Activated naive CD4-positive, alpha-beta T cell treated with anti-CD3 and anti-CD28 coated beads for 36 hours (primary cell): ENCODE measurements at regions of chr13 and their contacts with region 1.

Region 1: GRCh38 chr13:40666045-40666904 is at the start of gene FOXO1:
- DNase-seq: peak; percentile 84
- H3K4me3 Mint-ChIP-seq: peak within 1 kb of the TSS; percentile 92
- H3K27ac Mint-ChIP-seq: peak within 1 kb of the TSS; percentile 94
- H3K4me1 Mint-ChIP-seq: peaks cover 40% of the 10 kb centered on the region
- H3K27me3 Mint-ChIP-seq: no peaks in the 10 kb centered on the region
- total RNA-seq, gene FOXO1: 30.9 to 32.1 TPM

Region 2: DNA sequence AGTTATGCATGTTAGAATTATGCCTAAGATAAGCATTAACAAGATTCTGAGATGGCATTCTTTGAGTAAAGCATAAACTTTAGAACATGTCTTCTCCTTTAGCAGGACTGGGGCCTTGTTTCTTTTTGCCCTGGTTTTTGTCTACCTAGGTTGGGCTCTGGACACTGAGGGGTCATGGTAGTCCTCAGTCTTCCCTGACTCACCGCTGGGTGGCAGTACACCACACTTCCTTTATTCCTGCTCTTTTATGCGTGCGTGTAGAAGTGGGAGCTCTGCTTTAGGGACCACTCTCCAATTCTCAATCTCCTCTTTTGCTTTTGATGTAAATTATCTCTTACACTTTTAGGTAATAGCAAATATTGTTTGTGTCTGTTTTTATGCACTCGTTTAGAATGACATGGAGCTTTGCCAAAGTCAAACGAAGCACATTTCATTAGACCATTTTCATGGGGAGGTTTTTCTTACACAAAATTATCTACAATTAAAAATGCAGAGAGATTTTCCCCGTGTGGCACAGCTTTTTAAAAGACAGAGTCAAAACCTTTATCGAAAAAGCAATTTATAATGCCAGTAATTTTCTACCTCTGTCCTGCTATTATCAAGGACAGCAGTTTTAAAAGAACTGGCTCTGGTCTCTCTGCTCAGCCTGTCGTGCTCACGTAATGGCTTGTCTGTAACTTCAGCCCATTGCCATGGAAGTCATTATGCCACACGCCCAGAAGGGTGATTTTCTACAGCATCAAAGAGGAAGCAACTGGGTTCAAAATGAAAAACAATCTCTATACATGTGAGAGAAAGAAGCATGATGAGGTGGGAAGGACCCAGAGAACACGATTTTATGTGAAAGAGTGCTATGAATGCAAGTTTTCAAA is 596.9 kb before region 1 on chr13:
- CTCF ChIA-PET with region 1: interaction called, 5 read pairs
- intact Hi-C with region 1: loop called (anchors 1 kb)
- DNase-seq: peak; percentile 87
- H3K4me3 Mint-ChIP-seq: peak overlapping the region; percentile 12
- H3K27ac Mint-ChIP-seq: peak overlapping the region; percentile 27
- H3K4me1 Mint-ChIP-seq: peaks cover 29% of the 10 kb centered on the region
- H3K27me3 Mint-ChIP-seq: no peaks in the 10 kb centered on the region

Region 3: GRCh38 chr13:40206241-40207000 is 459.9 kb before region 1 on chr13:
- CTCF ChIA-PET with region 1: no interaction called
- intact Hi-C with region 1: loop called (anchors 1 kb)
- DNase-seq: peak; percentile 74
- H3K4me3 Mint-ChIP-seq: peak overlapping the region; percentile 64
- H3K27ac Mint-ChIP-seq: peak overlapping the region; percentile 100
- H3K4me1 Mint-ChIP-seq: peaks cover 73% of the 10 kb centered on the region
- H3K27me3 Mint-ChIP-seq: no peaks in the 10 kb centered on the region

Region 4: GRCh38 chr13:40371531-40372125 is 294.6 kb before region 1 on chr13:
- CTCF ChIA-PET with region 1: no interaction called
- intact Hi-C with region 1: loop called (anchors 5 kb)
- DNase-seq: no peak
- H3K4me3 Mint-ChIP-seq: no peak overlapping the region
- H3K27ac Mint-ChIP-seq: no peak overlapping the region
- H3K4me1 Mint-ChIP-seq: peaks cover 49% of the 10 kb centered on the region
- H3K27me3 Mint-ChIP-seq: no peaks in the 10 kb centered on the region

Region 5: GRCh38 chr13:40517486-40518480 is 148.5 kb before region 1 on chr13:
- CTCF ChIA-PET with region 1: interaction called, 3 read pairs
- intact Hi-C with region 1: loop called (anchors 1 kb)
- DNase-seq: peak; percentile 57
- H3K4me3 Mint-ChIP-seq: peak overlapping the region; percentile 23
- H3K27ac Mint-ChIP-seq: peak overlapping the region; percentile 87
- H3K4me1 Mint-ChIP-seq: peaks cover 78% of the 10 kb centered on the region
- H3K27me3 Mint-ChIP-seq: no peaks in the 10 kb centered on the region

Region 6: GRCh38 chr13:40653527-40654318 is 12.6 kb before region 1 on chr13:
- CTCF ChIA-PET with region 1: interaction called, 8 read pairs
- intact Hi-C with region 1: loop called (anchors 1 kb)
- DNase-seq: no peak
- H3K4me3 Mint-ChIP-seq: peak overlapping the region; percentile 58
- H3K27ac Mint-ChIP-seq: peak overlapping the region; percentile 95
- H3K4me1 Mint-ChIP-seq: peaks cover 94% of the 10 kb centered on the region
- H3K27me3 Mint-ChIP-seq: no peaks in the 10 kb centered on the region

Region 7: GRCh38 chr13:42271337-42272114 is 1605.3 kb after region 1 on chr13:
- CTCF ChIA-PET with region 1: no interaction called
- intact Hi-C with region 1: loop called (anchors 10 kb)
- DNase-seq: peak; percentile 95
- H3K4me3 Mint-ChIP-seq: peak overlapping the region; percentile 94
- H3K27ac Mint-ChIP-seq: peak overlapping the region; percentile 88
- H3K4me1 Mint-ChIP-seq: peaks cover 46% of the 10 kb centered on the region
- H3K27me3 Mint-ChIP-seq: no peaks in the 10 kb centered on the region